OCI-LY7 (cell line): ENCODE measurements at regions of chr16 and their contacts with region 1.

Region 1: GRCh38 chr16:53549970-53550690 is 47.1 kb upstream of the AKTIP start:
- DNase-seq: peak; percentile 63
- H3K4me3 ChIP-seq: no peak overlapping the region
- H3K27ac ChIP-seq: no peak overlapping the region
- H3K4me1 ChIP-seq: no peaks in the 10 kb centered on the region
- CTCF ChIP-seq: peak; percentile 83

Region 2: DNA sequence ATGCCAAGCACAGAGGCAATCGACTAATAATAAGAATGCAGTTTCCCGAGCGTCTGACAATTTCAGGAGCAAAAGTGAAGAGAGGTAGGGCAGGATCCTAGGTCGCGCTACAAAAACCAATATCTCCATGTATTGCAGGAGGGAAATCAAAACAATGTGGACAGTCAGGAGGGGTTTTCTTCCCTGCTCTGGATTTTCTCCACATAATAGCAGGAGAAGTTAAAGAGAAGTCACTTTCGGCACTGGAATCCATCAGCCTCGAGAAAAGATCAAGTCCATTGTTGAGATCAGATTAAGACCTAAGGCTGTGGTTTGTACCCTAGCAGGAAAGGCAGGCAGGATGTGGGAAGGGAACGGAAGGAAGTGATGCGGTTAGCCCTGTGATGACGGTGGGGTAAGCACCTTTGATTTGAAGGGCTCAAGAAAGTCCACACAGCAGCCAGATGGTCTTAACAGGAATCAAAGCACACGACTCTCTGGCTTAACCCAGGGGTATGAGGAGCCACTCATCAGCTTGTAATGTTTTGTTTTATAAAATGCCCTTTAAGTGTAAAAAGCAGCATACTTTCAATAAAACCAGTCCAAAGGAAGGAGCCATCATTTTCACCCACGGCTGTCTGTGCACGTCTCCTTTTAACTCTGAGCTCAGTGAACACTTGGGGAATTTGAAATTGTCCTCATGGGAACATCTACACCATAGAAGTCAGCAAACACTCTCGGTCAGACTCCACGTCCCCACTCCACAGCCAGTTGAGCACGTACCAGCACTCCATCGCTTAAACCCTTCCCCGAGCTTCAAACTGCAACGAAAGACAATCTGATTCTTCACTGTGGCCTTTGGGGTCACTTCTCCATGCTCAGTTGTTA is 31.3 kb before region 1 on chr16:
- CTCF ChIA-PET with region 1: interaction called, 15 read pairs
- POLR2A ChIA-PET with region 1: no interaction called
- intact Hi-C with region 1: no loop called
- DNase-seq: peak; percentile 80
- H3K4me3 ChIP-seq: peak overlapping the region; percentile 7
- H3K27ac ChIP-seq: peak overlapping the region; percentile 37
- H3K4me1 ChIP-seq: peaks cover 17% of the 10 kb centered on the region
- CTCF ChIP-seq: no peak